ENCODE measurements at regions of chr1 and their contacts with region 1.

Region 1: DNA sequence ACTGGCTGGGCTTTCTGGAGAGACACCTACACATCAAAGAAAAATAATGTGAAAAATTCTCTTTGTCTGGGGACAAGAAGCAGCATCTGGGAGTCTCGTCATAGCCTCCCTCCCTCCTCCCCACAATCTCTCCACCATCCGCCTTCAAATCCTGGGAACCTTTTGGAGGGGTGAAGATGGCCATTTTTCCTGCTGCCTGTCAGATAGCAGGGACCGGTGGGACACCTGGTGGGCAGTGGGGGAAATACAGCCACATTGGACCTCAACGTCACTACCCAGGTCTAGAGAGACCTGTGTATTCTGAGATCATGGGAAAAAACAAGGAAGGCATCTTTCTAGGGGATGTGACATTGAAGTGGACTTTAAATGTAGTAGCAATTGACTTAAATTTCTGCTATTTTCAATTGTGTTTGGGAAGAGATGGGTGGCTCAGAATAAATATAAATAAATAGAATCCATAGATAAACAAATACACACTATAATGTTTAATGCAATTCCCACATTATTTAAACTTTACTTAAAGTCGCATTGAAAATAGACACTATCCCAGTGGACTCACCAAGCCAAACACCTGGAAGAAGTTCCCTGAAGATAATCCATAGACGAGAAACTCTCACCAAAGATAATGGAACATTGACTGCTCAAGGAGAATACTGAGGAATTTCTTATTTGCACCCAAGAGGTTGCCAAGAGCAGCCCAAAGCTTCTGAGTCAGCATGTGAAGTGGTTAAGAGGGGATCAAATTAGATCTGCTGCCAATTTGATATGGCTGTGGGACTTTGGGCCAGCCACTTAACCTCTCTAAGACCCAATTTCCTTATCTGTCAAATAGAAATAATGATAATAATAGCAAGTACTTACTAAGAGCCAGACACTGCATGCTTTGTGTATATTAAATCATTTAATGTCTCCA is 147.6 kb upstream of the CAMK1G start:
- DNase-seq: peak; percentile 64 to 88
- H3K4me3 ChIP-seq: no peak overlapping the region
- H3K27ac ChIP-seq: peak overlapping the region; percentile 98
- H3K4me1 ChIP-seq: peaks cover 48% of the 10 kb centered on the region
- H3K27me3 ChIP-seq: no peaks in the 10 kb centered on the region
- CTCF ChIP-seq: peak; percentile 98

Region 2: DNA sequence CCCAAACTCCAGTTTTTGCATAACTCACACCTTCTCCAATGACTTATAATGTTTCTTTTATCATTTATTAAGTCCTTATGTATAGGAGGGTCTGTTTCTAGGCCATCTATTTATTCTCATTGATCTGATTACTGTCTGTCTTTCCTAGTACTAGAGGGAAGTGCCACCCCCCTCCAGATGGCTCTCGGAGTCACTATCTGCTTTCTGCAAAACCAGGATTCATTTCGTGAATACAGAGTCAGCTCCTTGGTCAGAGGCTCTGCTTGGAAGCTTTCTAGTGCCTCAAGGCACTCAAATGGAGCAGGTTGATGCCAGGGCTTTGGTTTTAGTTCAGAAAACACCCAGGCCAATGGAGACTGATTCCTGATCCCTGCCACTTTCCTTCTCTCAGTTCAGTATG is 1422.7 kb before region 1 on chr1:
- CTCF ChIA-PET with region 1: no interaction called
- POLR2A ChIA-PET with region 1: no interaction called
- intact Hi-C with region 1: no loop called
- DNase-seq: no peak
- H3K4me3 ChIP-seq: no peak overlapping the region
- H3K27ac ChIP-seq: no peak overlapping the region
- H3K4me1 ChIP-seq: no peaks in the 10 kb centered on the region
- H3K27me3 ChIP-seq: no peaks in the 10 kb centered on the region
- CTCF ChIP-seq: no peak

Region 3: GRCh38 chr1:208820580-208821212 is 615.2 kb before region 1 on chr1:
- CTCF ChIA-PET with region 1: no interaction called
- POLR2A ChIA-PET with region 1: no interaction called
- intact Hi-C with region 1: no loop called
- DNase-seq: no peak
- H3K4me3 ChIP-seq: no peak overlapping the region
- H3K27ac ChIP-seq: no peak overlapping the region
- H3K4me1 ChIP-seq: no peaks in the 10 kb centered on the region
- H3K27me3 ChIP-seq: peaks cover 58% of the 10 kb centered on the region
- CTCF ChIP-seq: no peak

Region 4: DNA sequence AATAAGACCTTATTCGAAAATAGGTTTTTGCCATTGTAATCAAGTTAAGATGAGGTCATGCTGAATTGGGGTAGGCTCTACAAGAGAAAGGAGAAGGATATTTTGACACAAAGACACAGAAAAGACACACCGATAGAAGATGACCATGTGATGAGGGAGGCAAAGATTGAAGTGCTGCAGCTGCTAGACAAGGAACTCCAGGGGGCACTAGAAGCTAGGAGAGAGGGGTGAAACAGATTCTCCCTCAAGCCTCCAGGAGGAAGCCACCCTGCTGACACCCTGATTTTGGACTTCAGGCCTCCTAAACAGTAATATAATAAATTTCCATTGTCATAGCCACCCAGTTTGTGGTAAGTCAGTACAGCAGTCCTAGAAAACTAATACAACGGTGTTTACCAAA is 359.2 kb before region 1 on chr1:
- CTCF ChIA-PET with region 1: no interaction called
- POLR2A ChIA-PET with region 1: no interaction called
- intact Hi-C with region 1: loop called (anchors 5 kb)
- DNase-seq: no peak
- H3K4me3 ChIP-seq: no peak overlapping the region
- H3K27ac ChIP-seq: no peak overlapping the region
- H3K4me1 ChIP-seq: peaks cover 6% of the 10 kb centered on the region
- H3K27me3 ChIP-seq: no peaks in the 10 kb centered on the region
- CTCF ChIP-seq: peak; percentile 50

Region 5: DNA sequence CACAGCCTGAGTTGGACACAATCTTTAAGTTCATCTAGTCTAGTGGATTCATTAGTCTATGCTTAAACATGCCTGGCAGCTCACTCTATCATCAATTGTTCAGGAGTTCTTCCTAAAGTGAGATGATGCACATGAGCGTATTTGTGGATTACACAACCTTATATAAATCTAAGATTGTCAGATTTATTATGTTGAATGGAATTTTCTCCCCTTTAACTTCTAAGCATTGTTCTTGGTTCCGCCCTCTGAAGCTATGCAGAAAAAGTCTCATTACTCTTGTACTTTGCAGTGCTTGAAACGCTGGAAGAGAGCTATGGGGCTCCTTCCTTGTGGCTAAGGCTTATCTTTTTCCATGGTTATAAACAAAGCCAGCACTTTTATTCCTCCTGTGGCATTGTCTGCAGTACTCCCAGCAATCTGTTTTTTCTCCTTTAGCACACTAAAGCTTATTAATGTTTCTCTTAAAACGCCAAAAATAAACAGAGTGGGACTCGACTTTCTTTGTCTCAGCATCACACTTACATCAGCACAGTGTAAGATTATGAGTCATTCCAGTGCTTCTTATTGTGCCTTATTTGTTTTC is 169.2 kb before region 1 on chr1:
- CTCF ChIA-PET with region 1: no interaction called
- POLR2A ChIA-PET with region 1: no interaction called
- intact Hi-C with region 1: loop called (anchors 5 kb)
- DNase-seq: peak in 1 of 2 experiments; percentile 5
- H3K4me3 ChIP-seq: no peak overlapping the region
- H3K27ac ChIP-seq: peak overlapping the region; percentile 45
- H3K4me1 ChIP-seq: peaks cover 13% of the 10 kb centered on the region
- H3K27me3 ChIP-seq: no peaks in the 10 kb centered on the region
- CTCF ChIP-seq: no peak

Region 6: GRCh38 chr1:209383907-209384709 is 51.8 kb before region 1 on chr1:
- CTCF ChIA-PET with region 1: no interaction called
- POLR2A ChIA-PET with region 1: interaction called, 25 read pairs
- intact Hi-C with region 1: loop called (anchors 1 kb)
- DNase-seq: peak; percentile 55 to 90
- H3K4me3 ChIP-seq: no peak overlapping the region
- H3K27ac ChIP-seq: peak overlapping the region; percentile 77
- H3K4me1 ChIP-seq: peaks cover 69% of the 10 kb centered on the region
- H3K27me3 ChIP-seq: no peaks in the 10 kb centered on the region
- CTCF ChIP-seq: no peak

Region 7: DNA sequence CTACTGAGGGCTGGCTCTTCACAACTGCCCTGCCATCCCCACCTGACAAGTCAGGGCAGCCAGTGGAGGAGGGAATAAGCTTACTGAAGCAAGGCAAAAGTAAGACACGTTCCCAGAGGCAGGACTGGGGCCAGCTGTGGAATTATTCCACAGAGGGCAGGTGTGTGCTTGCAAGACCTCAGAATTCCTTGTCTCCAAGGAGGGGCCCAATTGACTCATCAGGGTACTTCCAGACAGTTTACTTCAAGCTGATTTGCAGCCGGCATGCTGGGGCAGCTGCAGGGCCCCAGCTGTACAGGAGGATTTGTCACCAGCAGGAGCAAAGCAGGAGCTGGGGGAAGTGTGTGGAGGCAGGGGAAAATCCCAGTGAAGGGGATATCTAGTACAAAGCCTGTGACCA is 19.9 kb before region 1 on chr1:
- CTCF ChIA-PET with region 1: no interaction called
- POLR2A ChIA-PET with region 1: interaction called, 20 read pairs
- intact Hi-C with region 1: no loop called
- DNase-seq: peak; percentile 81 to 85
- H3K4me3 ChIP-seq: no peak overlapping the region
- H3K27ac ChIP-seq: peak overlapping the region; percentile 67
- H3K4me1 ChIP-seq: peaks cover 44% of the 10 kb centered on the region
- H3K27me3 ChIP-seq: no peaks in the 10 kb centered on the region
- CTCF ChIP-seq: no peak

Region 8: GRCh38 chr1:209484429-209484828 is 48.5 kb after region 1 on chr1:
- CTCF ChIA-PET with region 1: no interaction called
- POLR2A ChIA-PET with region 1: no interaction called
- intact Hi-C with region 1: no loop called
- DNase-seq: no peak
- H3K4me3 ChIP-seq: no peak overlapping the region
- H3K27ac ChIP-seq: no peak overlapping the region
- H3K4me1 ChIP-seq: no peaks in the 10 kb centered on the region
- H3K27me3 ChIP-seq: no peaks in the 10 kb centered on the region
- CTCF ChIP-seq: no peak

Region 9: GRCh38 chr1:209527993-209528392 is 92.1 kb after region 1 on chr1:
- CTCF ChIA-PET with region 1: no interaction called
- POLR2A ChIA-PET with region 1: no interaction called
- intact Hi-C with region 1: no loop called
- DNase-seq: no peak
- H3K4me3 ChIP-seq: no peak overlapping the region
- H3K27ac ChIP-seq: no peak overlapping the region
- H3K4me1 ChIP-seq: no peaks in the 10 kb centered on the region
- H3K27me3 ChIP-seq: peaks cover 7% of the 10 kb centered on the region; the same call in 1 of the 2 replicates
- CTCF ChIP-seq: no peak

Measured in PC-9 (cell line).